ENCODE measurements at regions of chr1 and their contacts with region 1.

Region 1: DNA sequence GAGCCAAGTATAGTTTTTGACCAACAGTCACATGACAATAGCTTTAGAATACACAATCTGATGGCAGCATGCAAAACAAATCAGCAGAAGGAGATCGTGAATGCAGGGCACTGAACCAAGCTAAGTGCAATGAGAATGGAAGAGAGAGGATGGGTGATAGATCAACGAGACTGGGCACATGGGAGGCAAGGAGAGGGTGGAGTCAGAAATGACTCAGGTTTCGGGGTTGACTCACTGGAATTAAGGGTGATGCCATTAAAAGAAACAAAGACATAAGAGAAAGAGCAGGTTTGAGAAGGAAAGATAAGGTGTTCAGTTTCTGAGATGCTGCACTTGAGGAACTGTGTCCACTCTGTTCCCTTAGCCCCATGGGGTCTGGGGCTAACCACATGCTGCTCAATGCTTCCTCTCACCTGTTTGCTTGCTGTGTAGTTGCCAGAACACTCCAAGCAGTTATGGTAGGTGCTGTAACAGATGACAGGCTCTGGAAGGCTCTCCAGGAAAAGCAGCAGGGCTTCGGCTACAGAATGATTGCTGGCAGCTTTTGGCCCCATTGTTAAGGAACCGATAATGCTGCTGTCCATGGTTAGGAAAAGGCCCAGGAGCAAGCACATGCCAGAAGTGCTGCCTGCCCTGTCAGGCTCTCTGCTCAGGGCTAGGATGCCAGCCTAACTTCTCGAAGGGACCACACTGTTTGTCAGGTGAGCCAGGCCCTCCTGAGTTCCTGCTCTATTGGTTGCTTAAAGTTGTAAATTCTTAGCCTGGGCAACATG is 6.1 kb upstream of the MTF1 start:
- DNase-seq: peak; percentile 73
- ATAC-seq: peak; percentile 41
- H3K4me3 ChIP-seq: no peak overlapping the region
- H3K27ac ChIP-seq: peak overlapping the region; percentile 86
- H3K4me1 ChIP-seq: peaks cover 39% of the 10 kb centered on the region
- H3K27me3 ChIP-seq: no peaks in the 10 kb centered on the region
- CTCF ChIP-seq: no peak

Region 2: GRCh38 chr1:37317870-37318467 is 547.6 kb before region 1 on chr1:
- CTCF ChIA-PET with region 1: no interaction called
- POLR2A ChIA-PET with region 1: no interaction called
- intact Hi-C with region 1: no loop called
- DNase-seq: no peak
- ATAC-seq: no peak
- H3K4me3 ChIP-seq: no peak overlapping the region
- H3K27ac ChIP-seq: no peak overlapping the region
- H3K4me1 ChIP-seq: no peaks in the 10 kb centered on the region
- H3K27me3 ChIP-seq: peaks cover 86% of the 10 kb centered on the region
- CTCF ChIP-seq: no peak

Region 3: DNA sequence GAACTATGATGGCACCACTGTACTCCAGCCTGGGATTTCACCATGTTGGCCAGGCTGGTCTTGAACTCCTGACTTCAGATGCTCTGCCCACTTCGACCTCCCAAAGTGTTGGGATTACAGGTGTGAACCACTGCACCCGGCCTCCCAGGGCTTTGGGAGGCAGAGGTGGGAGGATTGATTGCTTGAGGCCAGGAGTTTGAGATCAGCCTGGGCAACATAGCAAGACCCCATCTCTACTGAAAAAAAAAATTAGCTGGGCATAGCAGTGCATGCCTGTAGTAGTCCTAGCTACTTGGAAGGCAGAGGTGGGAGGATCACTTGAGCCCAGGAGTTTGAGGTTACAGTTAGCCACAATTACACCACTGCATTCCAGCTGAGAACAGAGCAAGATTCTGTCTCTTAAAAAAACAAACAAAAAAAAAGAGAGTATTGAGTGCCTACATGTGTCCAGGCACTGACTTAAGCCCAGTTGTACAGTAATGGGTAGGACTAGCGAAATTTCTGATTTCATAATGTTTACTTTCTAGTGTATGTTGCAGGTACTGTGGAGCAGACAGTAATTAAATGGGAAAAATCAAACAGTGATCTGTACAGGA is 67.7 kb before region 1 on chr1:
- CTCF ChIA-PET with region 1: no interaction called
- POLR2A ChIA-PET with region 1: no interaction called
- intact Hi-C with region 1: no loop called
- DNase-seq: no peak
- ATAC-seq: no peak
- H3K4me3 ChIP-seq: no peak overlapping the region
- H3K27ac ChIP-seq: no peak overlapping the region
- H3K4me1 ChIP-seq: peaks cover 15% of the 10 kb centered on the region
- H3K27me3 ChIP-seq: no peaks in the 10 kb centered on the region
- CTCF ChIP-seq: no peak

Region 4: GRCh38 chr1:37940283-37940947 is 74.9 kb after region 1 on chr1:
- CTCF ChIA-PET with region 1: no interaction called
- POLR2A ChIA-PET with region 1: interaction called, 13 read pairs
- intact Hi-C with region 1: no loop called
- DNase-seq: no peak
- ATAC-seq: peak; percentile 66
- H3K4me3 ChIP-seq: no peak overlapping the region
- H3K27ac ChIP-seq: no peak overlapping the region
- H3K4me1 ChIP-seq: peaks cover 13% of the 10 kb centered on the region
- H3K27me3 ChIP-seq: no peaks in the 10 kb centered on the region
- CTCF ChIP-seq: no peak

Region 5: DNA sequence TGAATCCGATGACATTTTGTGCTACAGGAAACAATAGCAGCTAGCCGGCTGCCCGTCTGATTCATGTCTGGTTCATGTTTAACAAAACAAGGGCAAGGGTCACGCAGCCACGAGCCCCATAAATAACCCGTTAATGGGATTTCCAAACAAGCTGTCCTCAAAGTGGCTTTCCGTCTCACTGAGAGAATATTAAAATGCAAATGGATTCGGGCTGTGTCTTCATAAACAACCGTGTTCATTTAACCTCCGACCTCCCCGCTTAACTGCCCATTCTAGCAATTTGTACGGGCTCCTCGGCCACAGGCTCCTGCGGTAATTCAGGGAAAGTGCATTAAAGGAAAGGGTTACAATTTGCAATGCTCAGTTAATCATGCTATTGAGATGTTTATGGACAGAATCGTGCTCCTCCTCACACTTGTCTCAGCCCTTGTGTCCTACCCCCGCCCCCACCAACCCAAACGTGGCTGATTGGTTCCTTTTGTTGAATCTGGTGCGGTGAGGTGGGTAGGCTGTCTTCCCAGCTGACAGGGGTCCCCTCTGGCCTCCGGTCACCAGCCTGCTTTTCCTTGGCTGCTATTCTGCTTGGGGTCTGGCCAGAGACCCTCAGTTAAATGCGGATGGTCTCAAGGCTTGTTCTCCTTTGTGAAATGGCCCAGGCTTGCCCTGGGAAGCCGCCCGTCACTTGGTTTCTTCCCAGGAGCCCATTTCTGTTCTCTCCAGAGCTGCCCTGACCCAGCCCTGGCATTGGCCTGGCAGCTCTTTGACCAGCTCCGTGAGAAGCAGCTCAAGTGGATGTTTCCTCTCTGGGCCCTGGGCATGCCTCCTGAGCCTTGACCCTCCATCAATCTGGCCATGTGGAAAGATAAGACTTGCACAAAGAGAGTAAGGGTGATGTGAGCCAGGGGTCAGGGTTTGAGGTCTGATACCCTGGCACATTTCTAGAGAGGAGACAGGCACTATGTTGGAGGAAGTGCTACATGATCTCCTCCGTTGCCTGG is 381.7 kb after region 1 on chr1:
- CTCF ChIA-PET with region 1: no interaction called
- POLR2A ChIA-PET with region 1: no interaction called
- intact Hi-C with region 1: no loop called
- DNase-seq: peak; percentile 55
- ATAC-seq: peak; percentile 46
- H3K4me3 ChIP-seq: no peak overlapping the region
- H3K27ac ChIP-seq: no peak overlapping the region
- H3K4me1 ChIP-seq: peaks cover 9% of the 10 kb centered on the region
- H3K27me3 ChIP-seq: peaks cover 34% of the 10 kb centered on the region
- CTCF ChIP-seq: no peak

Measured in PC-3 (cell line).